Activated CD4-positive, alpha-beta memory T cell treated with anti-CD3 and anti-CD28 coated beads, Interleukin-2, amount 10 ng/mL, durations not matched to agents 7 days and 5 days (primary cell): ENCODE measurements at regions of chr20 and their contacts with region 1.

Region 1: GRCh38 chr20:49484180-49485140 is 2.0 kb upstream of the KCNB1 start:
- DNase-seq: peak; percentile 73
- H3K4me3 Mint-ChIP-seq: peak overlapping the region; percentile 76
- H3K27ac Mint-ChIP-seq: no peak overlapping the region
- H3K4me1 Mint-ChIP-seq: peaks cover 8% of the 10 kb centered on the region
- H3K27me3 Mint-ChIP-seq: peaks cover 64% of the 10 kb centered on the region

Region 2: GRCh38 chr20:49275636-49276035 is 208.8 kb before region 1 on chr20:
- CTCF ChIA-PET with region 1: no interaction called
- POLR2A ChIA-PET with region 1: no interaction called
- DNase-seq: no peak
- H3K4me3 Mint-ChIP-seq: peak overlapping the region; percentile 100
- H3K27ac Mint-ChIP-seq: peak overlapping the region; percentile 98
- H3K4me1 Mint-ChIP-seq: peaks cover 54% of the 10 kb centered on the region
- H3K27me3 Mint-ChIP-seq: no peaks in the 10 kb centered on the region

Region 3: GRCh38 chr20:49338061-49338460 is 146.4 kb before region 1 on chr20:
- CTCF ChIA-PET with region 1: interaction called, 28 read pairs
- POLR2A ChIA-PET with region 1: interaction called, 3 read pairs
- DNase-seq: no peak
- H3K4me3 Mint-ChIP-seq: no peak overlapping the region
- H3K27ac Mint-ChIP-seq: no peak overlapping the region
- H3K4me1 Mint-ChIP-seq: no peaks in the 10 kb centered on the region
- H3K27me3 Mint-ChIP-seq: peaks cover 22% of the 10 kb centered on the region

Region 4: GRCh38 chr20:49384437-49385088 is 99.9 kb before region 1 on chr20:
- CTCF ChIA-PET with region 1: interaction called, 26 read pairs
- POLR2A ChIA-PET with region 1: no interaction called
- DNase-seq: peak; percentile 73
- H3K4me3 Mint-ChIP-seq: no peak overlapping the region
- H3K27ac Mint-ChIP-seq: no peak overlapping the region
- H3K4me1 Mint-ChIP-seq: no peaks in the 10 kb centered on the region
- H3K27me3 Mint-ChIP-seq: peaks cover 32% of the 10 kb centered on the region

Region 5: GRCh38 chr20:49464531-49464930 is 19.9 kb before region 1 on chr20:
- CTCF ChIA-PET with region 1: no interaction called
- POLR2A ChIA-PET with region 1: no interaction called
- DNase-seq: no peak
- H3K4me3 Mint-ChIP-seq: no peak overlapping the region
- H3K27ac Mint-ChIP-seq: no peak overlapping the region
- H3K4me1 Mint-ChIP-seq: no peaks in the 10 kb centered on the region
- H3K27me3 Mint-ChIP-seq: peaks cover 32% of the 10 kb centered on the region

Region 6: GRCh38 chr20:49534255-49534712 is 49.8 kb after region 1 on chr20:
- CTCF ChIA-PET with region 1: interaction called, 15 read pairs
- POLR2A ChIA-PET with region 1: interaction called, 6 read pairs
- DNase-seq: peak; percentile 75
- H3K4me3 Mint-ChIP-seq: peak overlapping the region; percentile 42
- H3K27ac Mint-ChIP-seq: peak overlapping the region; percentile 89
- H3K4me1 Mint-ChIP-seq: peaks cover 31% of the 10 kb centered on the region
- H3K27me3 Mint-ChIP-seq: peaks cover 17% of the 10 kb centered on the region